ENCODE measurements at regions of chr10 and their contacts with region 1.

Region 1: DNA sequence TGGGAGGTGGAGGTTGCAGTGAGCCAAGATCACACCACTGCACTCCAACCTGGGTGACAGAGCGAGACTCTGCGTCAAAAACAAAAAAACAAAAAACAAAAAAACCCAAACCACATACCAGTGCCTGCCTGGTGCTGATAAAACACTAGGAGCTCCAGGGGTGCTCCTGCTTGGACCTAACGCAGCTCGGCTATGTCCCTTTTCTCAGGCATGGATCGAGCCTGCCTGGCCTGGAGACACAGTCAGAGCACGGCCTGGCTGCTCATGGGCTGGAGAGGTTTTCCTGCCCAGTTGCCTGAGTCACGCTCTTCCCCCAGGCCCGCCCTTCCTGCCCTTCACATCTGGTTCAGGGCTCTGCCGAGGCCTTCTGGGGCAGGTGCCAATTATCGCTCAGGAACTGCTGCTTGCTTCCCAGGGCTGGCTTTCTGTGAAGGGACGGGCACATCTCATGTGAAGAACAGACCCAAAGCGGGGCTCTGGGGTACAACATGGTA is 12.6 kb upstream of the NPFFR1 start:
- DNase-seq: peak; percentile 93
- ATAC-seq: peak; percentile 93
- H3K4me3 ChIP-seq: no peak overlapping the region
- H3K27ac ChIP-seq: peak overlapping the region in 1 of 2 donors; percentile 7
- H3K4me1 ChIP-seq: no peaks in the 10 kb centered on the region
- H3K27me3 ChIP-seq: no peaks in the 10 kb centered on the region

Region 2: DNA sequence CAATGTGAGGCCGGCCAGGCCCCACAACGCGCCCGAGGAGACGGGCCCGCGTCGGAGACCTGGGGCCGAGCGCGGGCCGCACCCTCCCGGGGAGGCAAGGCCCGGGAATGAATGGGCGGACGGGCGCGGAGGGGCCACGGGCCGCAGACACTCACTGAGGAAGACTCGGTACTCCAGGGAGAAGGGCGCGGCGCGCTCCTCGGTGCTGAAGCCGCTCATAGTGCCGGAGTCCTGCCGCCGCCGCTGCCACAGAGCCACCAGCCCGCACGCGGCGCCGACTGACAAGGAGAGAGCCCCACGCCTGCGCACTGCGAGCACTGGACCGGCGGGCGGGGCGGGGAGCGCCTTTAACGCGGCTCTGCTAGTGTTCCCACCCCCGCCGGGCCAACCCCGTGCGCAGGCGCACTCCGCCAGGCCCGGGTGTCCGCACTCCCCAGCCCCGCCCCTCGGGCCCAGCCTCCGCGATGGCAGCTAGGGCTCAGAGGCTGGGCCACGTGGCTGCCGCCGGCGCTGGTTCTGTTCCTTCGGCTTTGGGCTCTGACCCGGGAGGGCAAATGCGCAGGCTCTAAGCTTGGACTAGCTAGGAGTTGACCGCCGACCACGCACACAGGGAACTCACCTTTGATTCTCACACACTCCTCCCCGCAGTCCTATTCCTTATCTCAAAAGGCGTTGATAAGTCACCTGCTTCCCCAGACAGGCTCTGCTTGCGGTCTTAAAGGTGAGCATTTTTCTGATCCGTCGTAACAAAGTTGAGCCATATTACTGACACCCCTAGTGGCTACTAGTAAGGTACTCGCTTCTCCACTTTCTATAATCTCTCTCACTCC is 63.1 kb before region 1 on chr10 and contains the start of gene PPA1:
- intact Hi-C with region 1: loop called in 1 of 2 experiments (anchors 5 kb)
- DNase-seq: peak; percentile 99 to 100
- ATAC-seq: peak; percentile 99
- H3K4me3 ChIP-seq: peak within 1 kb of the TSS; percentile 55 to 75
- H3K27ac ChIP-seq: peak within 1 kb of the TSS in 1 of 2 donors; percentile 28
- H3K4me1 ChIP-seq: no peaks in the 10 kb centered on the region
- H3K27me3 ChIP-seq: no peaks in the 10 kb centered on the region
- total RNA-seq, gene PPA1: 66.7 to 79.8 TPM

Region 3: DNA sequence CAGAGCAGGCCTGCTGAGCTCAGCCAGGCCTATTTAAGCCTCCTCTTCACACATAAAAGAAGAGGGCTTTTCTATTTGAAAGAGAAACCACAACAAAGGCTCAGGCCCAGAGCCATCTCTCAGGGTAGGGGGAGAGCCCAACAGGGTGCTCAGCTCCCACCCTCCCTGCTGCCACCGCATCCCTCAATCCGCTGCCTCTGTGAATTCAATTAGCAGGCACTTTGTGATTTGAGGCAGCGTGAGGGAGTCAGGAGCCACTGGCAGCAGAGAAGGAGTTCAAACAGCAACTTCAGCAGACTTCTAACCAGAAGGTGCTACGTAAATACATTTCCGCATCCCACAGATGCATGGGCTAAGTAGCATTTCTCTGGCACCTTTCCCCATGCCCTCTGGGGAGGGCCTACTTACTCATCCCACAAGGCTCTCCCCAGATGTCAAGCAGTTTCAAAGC is 40.8 kb after region 1 on chr10:
- intact Hi-C with region 1: no loop called
- DNase-seq: no peak
- ATAC-seq: no peak
- H3K4me3 ChIP-seq: no peak overlapping the region
- H3K27ac ChIP-seq: no peak overlapping the region
- H3K4me1 ChIP-seq: no peaks in the 10 kb centered on the region
- H3K27me3 ChIP-seq: no peaks in the 10 kb centered on the region

Region 4: DNA sequence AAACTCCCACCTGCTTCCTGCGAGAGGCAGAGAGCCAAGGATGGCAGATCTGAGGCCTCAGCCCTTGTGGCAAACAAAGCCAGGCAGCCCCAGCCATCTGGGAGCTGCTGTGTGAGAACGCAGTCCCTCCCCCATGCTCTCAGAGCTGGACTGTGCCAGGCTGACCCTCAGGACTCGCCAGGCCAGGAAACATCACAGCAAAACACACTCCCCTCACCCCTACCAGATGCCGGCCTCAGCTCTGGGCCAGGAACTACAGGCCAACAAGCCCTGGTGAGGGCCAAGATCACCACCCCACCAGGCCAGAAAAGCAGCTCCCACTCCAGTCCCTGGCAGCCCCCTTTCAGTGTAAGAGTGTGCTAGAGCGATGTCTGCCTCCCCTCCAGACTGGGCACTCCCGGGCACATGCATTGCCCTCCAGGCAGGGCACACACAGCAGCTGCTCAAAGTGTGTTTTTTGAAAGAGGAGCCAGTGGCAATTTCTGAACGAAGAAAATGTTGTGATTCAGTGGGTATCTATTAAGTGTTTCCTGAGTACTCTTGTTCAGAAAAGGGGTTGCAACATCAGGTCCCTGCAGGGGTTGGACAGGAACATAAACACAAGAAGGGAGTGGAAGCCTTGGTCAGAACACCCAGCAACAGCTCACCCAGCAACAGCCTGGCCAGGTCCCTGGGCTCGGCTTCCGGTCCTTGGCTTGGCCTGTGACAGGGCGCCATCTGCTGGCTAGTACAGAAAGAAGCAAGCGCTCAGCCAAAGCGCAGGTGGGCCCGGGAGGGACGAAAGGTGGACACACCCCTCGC is 67.7 kb after region 1 on chr10:
- intact Hi-C with region 1: loop called in 1 of 2 experiments (anchors 5 kb)
- DNase-seq: peak; percentile 94 to 96
- ATAC-seq: peak; percentile 97
- H3K4me3 ChIP-seq: no peak overlapping the region
- H3K27ac ChIP-seq: peak overlapping the region; percentile 12 to 65
- H3K4me1 ChIP-seq: no peaks in the 10 kb centered on the region
- H3K27me3 ChIP-seq: no peaks in the 10 kb centered on the region

Measured in aorta (tissue), 5 donors.